Left ventricle myocardium superior (tissue), 1 donor: ENCODE measurements at regions of chr2 and their contacts with region 1.

Region 1: GRCh38 chr2:32788114-32788513 is 158.6 kb upstream of the LTBP1 start:
- DNase-seq: no peak
- ATAC-seq: no peak

Region 2: DNA sequence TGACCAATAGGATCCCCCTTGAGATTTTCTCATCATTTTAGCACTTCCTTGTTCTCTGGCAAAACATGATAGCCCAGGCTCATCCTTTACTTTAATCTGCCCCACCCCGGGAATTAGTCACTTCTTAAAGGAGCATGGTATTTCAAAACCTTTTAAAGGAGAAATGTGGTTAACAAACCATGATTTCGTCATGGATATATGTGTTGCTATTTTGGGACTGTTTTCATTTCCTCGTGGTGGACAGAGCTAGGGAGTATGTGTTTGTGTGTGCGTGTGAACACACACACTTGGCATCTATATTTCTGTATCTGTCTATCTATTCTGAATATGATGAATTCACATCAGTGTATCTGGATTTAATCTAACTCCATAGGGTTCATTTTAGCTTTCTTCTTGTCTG is 303.2 kb before region 1 on chr2:
- intact Hi-C with region 1: no loop called
- DNase-seq: no peak
- ATAC-seq: peak; percentile 23

Region 3: GRCh38 chr2:33033606-33034081 is 245.5 kb after region 1 on chr2:
- intact Hi-C with region 1: loop called (anchors 5 kb)
- DNase-seq: no peak
- ATAC-seq: peak; percentile 75